ENCODE measurements at regions of chr17 and their contacts with region 1.

Region 1: GRCh38 chr17:44308320-44308818 is at the start of gene RUNDC3A:
- DNase-seq: peak; percentile 75 to 90 (median 85)
- ATAC-seq: peak; percentile 99
- H3K4me3 ChIP-seq: no peak within 1 kb of the TSS
- H3K4me3 Mint-ChIP-seq: peak within 1 kb of the TSS; percentile 42 to 84 (median 63)
- H3K27ac ChIP-seq: no peak within 1 kb of the TSS
- H3K27ac Mint-ChIP-seq: peak within 1 kb of the TSS in 3 of 9 donors; percentile 13 to 75 (median 71)
- H3K4me1 ChIP-seq: peaks cover 0 to 5% of the 10 kb centered on the region in 2 donors
- H3K4me1 Mint-ChIP-seq: peaks cover 14 to 27% (median 15%) of the 10 kb centered on the region in 7 donors
- H3K27me3 ChIP-seq: no peaks in the 10 kb centered on the region
- H3K27me3 Mint-ChIP-seq: peaks cover 28 to 57% (median 32%) of the 10 kb centered on the region in 5 donors
- total RNA-seq, gene RUNDC3A: 0.08 to 0.22 TPM in 2 of 5 experiments, not detected in the others

Region 2: DNA sequence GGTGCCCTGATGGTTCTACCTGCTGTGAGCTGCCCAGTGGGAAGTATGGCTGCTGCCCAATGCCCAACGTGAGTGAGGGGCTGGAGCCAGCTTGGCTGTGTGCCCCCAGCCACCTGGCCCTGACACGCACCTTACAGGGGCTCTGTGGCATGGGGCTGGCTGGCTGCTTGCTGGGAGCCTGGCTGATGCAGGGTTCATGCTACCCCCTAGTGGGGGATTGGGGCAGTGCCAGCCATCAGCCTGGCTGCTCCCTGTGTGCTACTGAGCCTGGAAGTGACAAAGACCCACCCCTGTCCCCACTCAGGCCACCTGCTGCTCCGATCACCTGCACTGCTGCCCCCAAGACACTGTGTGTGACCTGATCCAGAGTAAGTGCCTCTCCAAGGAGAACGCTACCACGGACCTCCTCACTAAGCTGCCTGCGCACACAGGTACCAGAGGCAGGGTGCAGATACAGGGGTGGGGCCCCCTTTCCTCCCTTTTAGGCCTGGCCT is 42.4 kb after region 1 on chr17:
- CTCF ChIA-PET with region 1: no interaction called
- POLR2A ChIA-PET with region 1: no interaction called
- intact Hi-C with region 1: loop called in 1 of 2 experiments (anchors 2 kb)
- DNase-seq: peak; percentile 49 to 76 (median 70)
- ATAC-seq: peak; percentile 72
- H3K4me3 ChIP-seq: no peak overlapping the region
- H3K4me3 Mint-ChIP-seq: peak overlapping the region in 1 of 10 donors; percentile 17
- H3K27ac ChIP-seq: no peak overlapping the region
- H3K27ac Mint-ChIP-seq: no peak overlapping the region
- H3K4me1 ChIP-seq: peaks cover 4 to 6% of the 10 kb centered on the region in 2 donors
- H3K4me1 Mint-ChIP-seq: peaks cover 5 to 18% (median 12%) of the 10 kb centered on the region in 7 donors
- H3K27me3 ChIP-seq: no peaks in the 10 kb centered on the region
- H3K27me3 Mint-ChIP-seq: peaks cover 0 to 10% (median 0%) of the 10 kb centered on the region in 5 donors

Region 3: DNA sequence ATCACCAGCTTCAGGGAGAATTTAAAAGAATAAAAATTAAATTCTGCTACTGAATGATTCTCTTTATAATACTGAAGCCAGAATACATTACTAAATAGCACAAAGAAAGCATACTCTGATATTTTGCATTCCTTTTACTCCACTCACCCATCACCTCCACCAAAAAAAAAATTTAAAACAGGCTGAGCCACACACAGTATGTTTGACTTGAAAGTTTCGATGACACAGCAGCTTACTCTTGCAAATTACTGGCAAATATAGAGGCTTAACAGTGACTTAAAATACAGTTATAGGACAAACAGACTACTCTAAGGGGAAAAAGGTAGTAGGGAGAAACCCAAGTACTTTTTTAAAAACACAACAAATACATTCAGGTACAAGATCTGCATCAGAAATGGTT is 155.7 kb after region 1 on chr17:
- CTCF ChIA-PET with region 1: no interaction called
- POLR2A ChIA-PET with region 1: no interaction called
- intact Hi-C with region 1: no loop called
- DNase-seq: no peak
- ATAC-seq: no peak
- H3K4me3 ChIP-seq: no peak overlapping the region
- H3K4me3 Mint-ChIP-seq: no peak overlapping the region
- H3K27ac ChIP-seq: no peak overlapping the region
- H3K27ac Mint-ChIP-seq: peak overlapping the region in 1 of 9 donors; percentile 33
- H3K4me1 ChIP-seq: no peaks in the 10 kb centered on the region
- H3K4me1 Mint-ChIP-seq: peaks cover 20 to 50% (median 40%) of the 10 kb centered on the region in 7 donors
- H3K27me3 ChIP-seq: no peaks in the 10 kb centered on the region
- H3K27me3 Mint-ChIP-seq: no peaks in the 10 kb centered on the region